ENCODE measurements at regions of chr2 and their contacts with region 1.

Region 1: GRCh38 chr2:120312861-120313694 is 32.9 kb upstream of the INHBB start:
- DNase-seq: peak; percentile 86
- ATAC-seq: peak; percentile 77
- H3K4me3 Mint-ChIP-seq: peak overlapping the region; percentile 61
- H3K27ac Mint-ChIP-seq: peak overlapping the region; percentile 16
- H3K4me1 Mint-ChIP-seq: peaks cover 19% of the 10 kb centered on the region
- H3K27me3 Mint-ChIP-seq: no peaks in the 10 kb centered on the region
- CTCF ChIP-seq: peak; percentile 86

Region 2: GRCh38 chr2:119846020-119846419 is 467.1 kb before region 1 on chr2:
- CTCF ChIA-PET with region 1: no interaction called
- POLR2A ChIA-PET with region 1: no interaction called
- intact Hi-C with region 1: no loop called
- DNase-seq: no peak
- ATAC-seq: no peak
- H3K4me3 Mint-ChIP-seq: no peak overlapping the region
- H3K27ac Mint-ChIP-seq: no peak overlapping the region
- H3K4me1 Mint-ChIP-seq: peaks cover 30% of the 10 kb centered on the region
- H3K27me3 Mint-ChIP-seq: no peaks in the 10 kb centered on the region
- CTCF ChIP-seq: no peak

Region 3: GRCh38 chr2:120182019-120182560 is 131.0 kb before region 1 on chr2:
- CTCF ChIA-PET with region 1: interaction called, 79 read pairs
- POLR2A ChIA-PET with region 1: no interaction called
- intact Hi-C with region 1: no loop called
- DNase-seq: no peak
- ATAC-seq: peak; percentile 12
- H3K4me3 Mint-ChIP-seq: peak overlapping the region; percentile 10
- H3K27ac Mint-ChIP-seq: peak overlapping the region; percentile 79
- H3K4me1 Mint-ChIP-seq: peaks cover 40% of the 10 kb centered on the region
- H3K27me3 Mint-ChIP-seq: no peaks in the 10 kb centered on the region
- CTCF ChIP-seq: no peak

Region 4: GRCh38 chr2:120231974-120232635 is 81.0 kb before region 1 on chr2:
- CTCF ChIA-PET with region 1: interaction called, 18 read pairs
- POLR2A ChIA-PET with region 1: interaction called, 3 read pairs
- intact Hi-C with region 1: loop called (anchors 5 kb)
- DNase-seq: peak; percentile 85
- ATAC-seq: peak; percentile 90
- H3K4me3 Mint-ChIP-seq: peak overlapping the region; percentile 90
- H3K27ac Mint-ChIP-seq: peak overlapping the region; percentile 99
- H3K4me1 Mint-ChIP-seq: peaks cover 57% of the 10 kb centered on the region
- H3K27me3 Mint-ChIP-seq: no peaks in the 10 kb centered on the region
- CTCF ChIP-seq: no peak

Region 5: GRCh38 chr2:120257522-120257921 is 55.6 kb before region 1 on chr2:
- CTCF ChIA-PET with region 1: interaction called, 15 read pairs
- POLR2A ChIA-PET with region 1: no interaction called
- intact Hi-C with region 1: no loop called
- DNase-seq: no peak
- ATAC-seq: no peak
- H3K4me3 Mint-ChIP-seq: no peak overlapping the region
- H3K27ac Mint-ChIP-seq: no peak overlapping the region
- H3K4me1 Mint-ChIP-seq: peaks cover 32% of the 10 kb centered on the region
- H3K27me3 Mint-ChIP-seq: no peaks in the 10 kb centered on the region
- CTCF ChIP-seq: no peak

Region 6: DNA sequence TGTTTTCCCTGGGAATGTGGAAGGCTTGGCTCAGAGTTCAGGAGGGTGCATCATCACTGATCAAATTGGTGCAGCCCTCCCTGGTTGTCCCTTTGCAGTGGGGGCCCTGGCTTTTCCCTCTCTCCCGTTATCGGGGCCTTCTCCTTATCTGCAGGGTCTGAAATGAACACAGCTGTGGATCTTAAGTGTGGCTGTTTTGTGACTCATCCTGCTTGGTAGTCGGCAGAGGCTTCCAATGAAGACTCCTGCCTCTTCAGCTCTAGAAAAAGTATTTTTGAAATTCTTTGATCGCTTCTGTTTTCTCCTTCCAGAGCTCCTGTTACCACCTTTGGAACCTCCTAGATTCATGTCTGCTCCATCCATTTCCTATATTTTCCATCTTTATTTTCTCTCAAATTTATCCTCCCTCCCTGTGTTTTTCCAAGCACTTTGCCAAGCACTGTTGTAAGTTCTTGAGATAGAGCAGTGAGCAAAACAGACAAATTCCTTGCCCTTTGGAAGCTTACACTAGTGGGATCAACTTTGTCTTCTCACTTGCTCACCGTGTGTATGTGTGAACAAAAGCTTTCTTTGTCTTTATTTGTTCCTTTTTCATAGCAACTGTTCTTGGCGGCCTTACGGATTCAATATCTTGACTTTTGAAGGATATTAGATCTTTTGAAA is 14.8 kb before region 1 on chr2:
- CTCF ChIA-PET with region 1: interaction called, 23 read pairs
- POLR2A ChIA-PET with region 1: interaction called, 4 read pairs
- intact Hi-C with region 1: no loop called
- DNase-seq: no peak
- ATAC-seq: no peak
- H3K4me3 Mint-ChIP-seq: no peak overlapping the region
- H3K27ac Mint-ChIP-seq: no peak overlapping the region
- H3K4me1 Mint-ChIP-seq: peaks cover 3% of the 10 kb centered on the region
- H3K27me3 Mint-ChIP-seq: no peaks in the 10 kb centered on the region
- CTCF ChIP-seq: no peak

Region 7: GRCh38 chr2:120360307-120360855 is 47.3 kb after region 1 on chr2:
- CTCF ChIA-PET with region 1: no interaction called
- POLR2A ChIA-PET with region 1: no interaction called
- intact Hi-C with region 1: no loop called
- DNase-seq: no peak
- ATAC-seq: no peak
- H3K4me3 Mint-ChIP-seq: no peak overlapping the region
- H3K27ac Mint-ChIP-seq: no peak overlapping the region
- H3K4me1 Mint-ChIP-seq: no peaks in the 10 kb centered on the region
- H3K27me3 Mint-ChIP-seq: no peaks in the 10 kb centered on the region
- CTCF ChIP-seq: no peak